ENCODE measurements at regions of chr4 and their contacts with region 1.

Region 1: DNA sequence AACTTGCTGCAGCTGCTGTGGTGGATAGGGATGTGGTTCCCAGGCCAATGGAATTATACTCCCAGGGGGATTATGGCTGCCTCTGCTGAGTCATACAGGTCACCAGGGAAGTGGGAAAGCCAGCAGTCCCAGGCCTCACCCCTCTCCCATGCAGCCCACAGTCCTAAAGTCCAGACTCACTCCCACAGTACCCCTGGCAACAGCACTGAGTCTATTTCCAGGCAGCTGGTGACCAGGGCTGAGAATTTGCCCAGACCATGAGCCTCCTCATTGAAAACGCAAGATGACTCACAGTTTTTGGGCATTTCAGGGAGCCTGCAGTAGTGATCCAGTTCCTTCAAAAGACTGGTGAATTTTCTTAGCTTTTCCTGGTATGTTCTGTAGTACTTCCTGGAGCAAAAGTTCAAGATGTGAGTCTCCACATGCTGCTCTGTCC is 137.6 kb downstream of the NPNT start:
- DNase-seq: peak; percentile 36 to 88
- H3K4me3 ChIP-seq: no peak overlapping the region
- H3K27ac ChIP-seq: peak overlapping the region; percentile 69 to 70
- H3K4me1 ChIP-seq: peaks cover 0 to 17% of the 10 kb centered on the region in 2 donors
- H3K27me3 ChIP-seq: no peaks in the 10 kb centered on the region
- CTCF ChIP-seq: no peak

Region 2: DNA sequence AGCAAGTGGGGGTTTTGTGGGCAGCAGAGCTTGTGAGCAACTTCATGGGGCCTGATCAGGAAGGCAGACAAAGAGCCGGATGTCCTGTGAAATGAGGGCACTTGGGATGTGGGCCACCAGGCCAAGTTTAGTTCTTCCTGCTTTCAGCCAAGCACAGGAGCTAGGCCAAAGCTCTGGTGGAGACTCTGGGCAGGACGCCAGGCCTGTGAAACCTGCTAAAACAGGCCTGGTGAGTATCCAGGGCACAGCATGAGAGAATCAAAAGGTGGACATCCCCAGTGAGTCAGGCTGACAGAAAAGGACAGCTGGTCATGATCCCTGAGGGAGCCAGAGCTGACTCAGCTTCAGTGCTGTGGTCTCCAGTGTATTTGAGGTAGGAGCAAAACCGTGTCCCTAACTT is 41.9 kb before region 1 on chr4:
- intact Hi-C with region 1: loop called (anchors 5 kb)
- DNase-seq: peak; percentile 70 to 86
- H3K4me3 ChIP-seq: no peak overlapping the region
- H3K27ac ChIP-seq: peak overlapping the region; percentile 74 to 79
- H3K4me1 ChIP-seq: peaks cover 8 to 12% of the 10 kb centered on the region in 2 donors
- H3K27me3 ChIP-seq: no peaks in the 10 kb centered on the region
- CTCF ChIP-seq: no peak

Region 3: DNA sequence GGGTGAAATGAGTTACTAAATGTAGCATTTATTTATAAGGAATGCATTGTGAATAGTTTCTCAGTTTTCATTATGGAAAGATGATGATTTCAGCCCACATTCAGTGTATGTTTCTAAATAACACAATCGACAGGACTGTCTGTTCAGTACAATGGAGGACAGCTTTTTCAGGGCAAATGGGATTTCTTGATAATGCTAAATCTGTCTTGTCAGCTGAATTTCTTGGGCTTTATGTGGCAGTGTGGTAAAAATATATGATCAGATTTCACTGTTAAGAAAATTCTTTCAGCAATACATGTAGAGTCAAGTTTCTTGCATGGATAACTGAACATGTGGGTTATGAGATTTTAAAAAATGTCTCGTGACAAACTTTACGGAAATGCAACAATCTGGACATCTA is 13.2 kb after region 1 on chr4:
- intact Hi-C with region 1: loop called (anchors 1 kb)
- DNase-seq: no peak
- H3K4me3 ChIP-seq: no peak overlapping the region
- H3K27ac ChIP-seq: no peak overlapping the region
- H3K4me1 ChIP-seq: peaks cover 2 to 9% of the 10 kb centered on the region in 2 donors
- H3K27me3 ChIP-seq: no peaks in the 10 kb centered on the region
- CTCF ChIP-seq: no peak